PC-3 (cell line): ENCODE measurements at regions of chr2 and their contacts with region 1.

Region 1: GRCh38 chr2:209208211-209208610 is 215.6 kb upstream of the MAP2 start:
- DNase-seq: peak; percentile 43
- ATAC-seq: no peak
- H3K4me3 ChIP-seq: peak overlapping the region; percentile 55
- H3K27ac ChIP-seq: no peak overlapping the region
- H3K4me1 ChIP-seq: no peaks in the 10 kb centered on the region
- H3K27me3 ChIP-seq: 0 out of 2 replicates have a peak, but pooled peaks cover 12% of the 10 kb centered on the region
- CTCF ChIP-seq: peak; percentile 79

Region 2: GRCh38 chr2:208466151-208466919 is 741.9 kb before region 1 on chr2:
- CTCF ChIA-PET with region 1: no interaction called
- POLR2A ChIA-PET with region 1: no interaction called
- intact Hi-C with region 1: loop called (anchors 5 kb)
- DNase-seq: peak; percentile 68
- ATAC-seq: peak; percentile 57; the same call in 1 of the 2 replicates
- H3K4me3 ChIP-seq: no peak overlapping the region
- H3K27ac ChIP-seq: no peak overlapping the region
- H3K4me1 ChIP-seq: no peaks in the 10 kb centered on the region
- H3K27me3 ChIP-seq: peaks cover 13% of the 10 kb centered on the region; the same call in 1 of the 2 replicates
- CTCF ChIP-seq: peak; percentile 81